Activated CD4-positive, alpha-beta memory T cell treated with anti-CD3 and anti-CD28 coated beads, Interleukin-2, amount 10 ng/mL, durations not matched to agents 7 days and 5 days (primary cell): ENCODE measurements at regions of chr3 and their contacts with region 1.

Region 1: DNA sequence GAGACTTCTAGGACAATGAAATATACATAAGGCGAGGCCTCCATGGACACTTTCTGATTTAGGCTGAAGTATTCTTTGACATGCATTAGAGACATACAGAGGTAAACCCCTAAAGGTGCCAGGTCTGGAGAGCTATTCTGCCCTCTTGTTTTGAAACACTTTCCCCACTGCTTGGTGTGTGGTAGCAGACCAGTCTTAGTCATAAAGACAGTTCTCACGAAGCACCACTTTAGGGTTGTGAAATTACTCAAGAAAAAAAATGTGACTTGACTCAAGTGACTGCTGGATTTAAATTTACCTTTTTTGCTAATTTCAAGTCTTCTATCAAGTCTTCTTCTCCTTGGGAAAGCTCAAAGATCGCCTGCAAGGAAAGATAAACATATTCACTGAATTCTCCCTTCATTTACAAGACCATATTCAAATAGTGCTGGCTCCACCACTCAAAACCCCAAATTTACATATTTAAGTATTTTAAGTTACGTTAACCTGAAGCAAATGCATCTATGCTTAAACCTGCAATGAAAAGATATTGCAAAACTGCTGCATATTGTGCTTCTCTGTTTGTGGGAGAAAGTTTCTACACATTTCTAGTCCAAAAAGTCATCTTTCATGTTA is 48.4 kb downstream of the ARHGEF3 start:
- DNase-seq: peak; percentile 55
- H3K4me3 Mint-ChIP-seq: peak overlapping the region; percentile 3
- H3K27ac Mint-ChIP-seq: peak overlapping the region; percentile 85
- H3K4me1 Mint-ChIP-seq: peaks cover 60% of the 10 kb centered on the region
- H3K27me3 Mint-ChIP-seq: no peaks in the 10 kb centered on the region

Region 2: GRCh38 chr3:56633602-56634535 is 119.4 kb before region 1 on chr3:
- CTCF ChIA-PET with region 1: no interaction called
- POLR2A ChIA-PET with region 1: no interaction called
- DNase-seq: no peak
- H3K4me3 Mint-ChIP-seq: no peak overlapping the region
- H3K27ac Mint-ChIP-seq: no peak overlapping the region
- H3K4me1 Mint-ChIP-seq: no peaks in the 10 kb centered on the region
- H3K27me3 Mint-ChIP-seq: no peaks in the 10 kb centered on the region

Region 3: DNA sequence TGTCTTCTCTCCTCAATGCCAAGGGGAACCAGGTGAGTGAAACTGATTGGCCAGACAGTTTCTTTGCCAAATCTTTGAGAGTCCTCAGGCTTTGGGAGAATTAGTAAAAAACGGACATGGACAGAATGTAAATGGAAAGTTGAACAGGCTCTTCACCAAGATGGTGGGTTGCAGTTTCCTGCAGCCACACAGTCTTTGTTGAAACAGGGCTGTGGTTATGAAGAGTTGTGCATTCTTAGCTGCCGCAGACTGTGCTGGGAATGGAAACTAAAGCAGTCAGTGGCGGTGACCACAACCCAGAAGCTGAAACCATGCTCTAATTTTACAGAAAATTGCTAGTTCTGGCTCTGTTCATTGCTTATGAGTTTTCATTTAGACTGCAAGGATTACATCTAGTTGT is 28.1 kb before region 1 on chr3:
- CTCF ChIA-PET with region 1: interaction called, 6 read pairs
- POLR2A ChIA-PET with region 1: interaction called, 31 read pairs
- DNase-seq: peak; percentile 82
- H3K4me3 Mint-ChIP-seq: peak overlapping the region; percentile 49
- H3K27ac Mint-ChIP-seq: peak overlapping the region; percentile 83
- H3K4me1 Mint-ChIP-seq: peaks cover 34% of the 10 kb centered on the region
- H3K27me3 Mint-ChIP-seq: no peaks in the 10 kb centered on the region

Region 4: DNA sequence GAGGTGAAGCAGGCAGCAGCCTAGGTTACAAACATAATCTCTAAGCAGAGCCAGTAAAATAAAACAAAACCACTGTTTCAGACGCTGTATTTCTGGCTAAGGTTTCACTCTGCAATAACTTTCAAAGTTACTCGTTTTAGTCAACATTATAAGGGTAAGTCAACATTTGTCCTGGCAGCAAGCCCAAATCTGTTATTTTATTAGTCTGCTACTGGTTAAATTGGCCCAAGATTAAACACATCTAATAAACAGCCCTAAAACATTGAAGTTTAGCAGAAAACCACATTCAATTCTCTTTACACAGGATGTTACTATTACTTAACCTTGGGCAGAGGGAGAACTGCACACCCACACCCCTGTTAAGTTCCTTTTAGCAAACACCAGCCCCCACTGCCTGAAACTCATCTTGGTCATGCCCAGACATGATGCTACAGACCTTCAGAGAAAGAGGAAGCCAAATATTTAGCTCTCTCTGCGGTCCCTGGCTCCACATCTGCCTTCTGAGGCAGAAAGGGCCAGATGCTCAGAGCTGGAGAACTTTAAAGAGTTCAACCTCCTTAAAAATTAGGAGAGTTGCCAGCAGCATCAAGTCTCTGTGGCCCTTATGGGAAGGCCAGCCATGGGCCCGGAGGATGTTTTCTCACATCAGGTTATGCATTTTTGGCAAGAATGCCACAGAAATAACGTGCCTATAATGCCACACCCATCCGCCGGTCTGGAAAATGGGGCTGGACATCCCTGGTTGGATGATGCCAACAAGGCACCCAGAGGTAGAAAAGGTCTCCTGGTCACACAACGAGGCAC is 30.5 kb after region 1 on chr3:
- CTCF ChIA-PET with region 1: interaction called, 14 read pairs
- POLR2A ChIA-PET with region 1: interaction called, 63 read pairs
- DNase-seq: peak; percentile 81
- H3K4me3 Mint-ChIP-seq: peak overlapping the region; percentile 57
- H3K27ac Mint-ChIP-seq: peak overlapping the region; percentile 96
- H3K4me1 Mint-ChIP-seq: peaks cover 89% of the 10 kb centered on the region
- H3K27me3 Mint-ChIP-seq: no peaks in the 10 kb centered on the region

Region 5: GRCh38 chr3:56790016-56790821 is 36.9 kb after region 1 on chr3:
- CTCF ChIA-PET with region 1: interaction called, 14 read pairs
- POLR2A ChIA-PET with region 1: interaction called, 63 read pairs
- DNase-seq: peak; percentile 24
- H3K4me3 Mint-ChIP-seq: peak overlapping the region; percentile 51
- H3K27ac Mint-ChIP-seq: peak overlapping the region; percentile 93
- H3K4me1 Mint-ChIP-seq: peaks cover 81% of the 10 kb centered on the region
- H3K27me3 Mint-ChIP-seq: no peaks in the 10 kb centered on the region

Region 6: GRCh38 chr3:56851966-56852884 is 98.9 kb after region 1 on chr3:
- CTCF ChIA-PET with region 1: no interaction called
- POLR2A ChIA-PET with region 1: no interaction called
- DNase-seq: no peak
- H3K4me3 Mint-ChIP-seq: no peak overlapping the region
- H3K27ac Mint-ChIP-seq: no peak overlapping the region
- H3K4me1 Mint-ChIP-seq: peaks cover 11% of the 10 kb centered on the region
- H3K27me3 Mint-ChIP-seq: no peaks in the 10 kb centered on the region